ENCODE measurements at regions of chr1 and their contacts with region 1.

Region 1: GRCh38 chr1:171313835-171314320 is at the start of gene FMO4:
- DNase-seq: peak; percentile 94 to 97
- ATAC-seq: peak; percentile 100
- H3K4me3 ChIP-seq: peak within 1 kb of the TSS; percentile 33
- H3K27ac ChIP-seq: peak within 1 kb of the TSS in 1 of 2 experiments; percentile 47; a peak in 1 of 6 replicates
- H3K4me1 ChIP-seq: 0 out of 3 replicates have a peak, but pooled peaks cover 3% of the 10 kb centered on the region
- CTCF ChIP-seq: peak; percentile 86
- EP300 ChIP-seq: no peak
- POLR2A ChIP-seq: no peak
- RAD21 ChIP-seq: peak; percentile 72 to 75
- polyA plus RNA-seq, gene FMO4: 0.99 and 1.9 TPM in 2 replicates

Region 2: GRCh38 chr1:170967042-170967910 is 346.6 kb before region 1 on chr1:
- CTCF ChIA-PET with region 1: interaction called, 17 read pairs
- POLR2A ChIA-PET with region 1: interaction called, 3 read pairs
- DNase-seq: peak; percentile 10 to 33
- ATAC-seq: peak; percentile 59 to 82; a peak in 4 of 6 replicates
- H3K4me3 ChIP-seq: no peak overlapping the region
- H3K27ac ChIP-seq: no peak overlapping the region
- H3K4me1 ChIP-seq: no peaks in the 10 kb centered on the region
- CTCF ChIP-seq: peak; percentile 42
- EP300 ChIP-seq: no peak
- POLR2A ChIP-seq: no peak
- RAD21 ChIP-seq: peak; percentile 24 to 51; a peak in 2 of 5 replicates

Region 3: DNA sequence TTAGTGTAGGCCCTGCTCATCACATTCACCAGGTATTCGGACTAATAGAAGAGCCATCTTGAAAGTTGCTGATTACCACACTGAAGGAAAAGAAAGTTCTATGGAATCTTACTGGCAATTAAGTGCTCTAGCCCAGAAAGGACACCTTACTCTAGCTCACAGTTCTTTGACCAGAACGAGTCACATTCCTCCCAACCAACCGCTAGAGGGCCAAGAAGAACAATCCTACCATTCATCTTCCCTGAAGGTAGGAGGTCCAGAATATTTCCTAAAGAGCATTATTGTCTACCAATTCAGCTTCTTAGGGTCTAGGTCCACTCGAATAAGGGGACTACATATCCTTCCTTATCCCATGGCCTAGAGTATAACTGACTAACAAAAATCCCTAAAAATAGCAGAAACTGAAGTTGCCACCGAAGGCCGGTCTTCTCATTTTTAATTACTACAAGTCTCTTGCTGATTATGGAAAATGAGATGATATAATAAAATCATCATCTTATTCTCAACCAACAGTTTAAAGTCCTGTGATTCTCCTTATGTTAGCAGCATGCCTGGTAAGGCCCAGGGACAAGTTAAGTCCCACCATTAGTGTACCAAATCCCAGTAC is 68.3 kb before region 1 on chr1:
- CTCF ChIA-PET with region 1: interaction called, 17 read pairs
- POLR2A ChIA-PET with region 1: interaction called, 3 read pairs
- DNase-seq: peak; percentile 48 to 58
- ATAC-seq: peak; percentile 95 to 96
- H3K4me3 ChIP-seq: no peak overlapping the region
- H3K27ac ChIP-seq: no peak overlapping the region
- H3K4me1 ChIP-seq: no peaks in the 10 kb centered on the region
- CTCF ChIP-seq: peak; percentile 68
- EP300 ChIP-seq: no peak
- POLR2A ChIP-seq: no peak
- RAD21 ChIP-seq: peak; percentile 43; a peak in 4 of 5 replicates

Region 4: DNA sequence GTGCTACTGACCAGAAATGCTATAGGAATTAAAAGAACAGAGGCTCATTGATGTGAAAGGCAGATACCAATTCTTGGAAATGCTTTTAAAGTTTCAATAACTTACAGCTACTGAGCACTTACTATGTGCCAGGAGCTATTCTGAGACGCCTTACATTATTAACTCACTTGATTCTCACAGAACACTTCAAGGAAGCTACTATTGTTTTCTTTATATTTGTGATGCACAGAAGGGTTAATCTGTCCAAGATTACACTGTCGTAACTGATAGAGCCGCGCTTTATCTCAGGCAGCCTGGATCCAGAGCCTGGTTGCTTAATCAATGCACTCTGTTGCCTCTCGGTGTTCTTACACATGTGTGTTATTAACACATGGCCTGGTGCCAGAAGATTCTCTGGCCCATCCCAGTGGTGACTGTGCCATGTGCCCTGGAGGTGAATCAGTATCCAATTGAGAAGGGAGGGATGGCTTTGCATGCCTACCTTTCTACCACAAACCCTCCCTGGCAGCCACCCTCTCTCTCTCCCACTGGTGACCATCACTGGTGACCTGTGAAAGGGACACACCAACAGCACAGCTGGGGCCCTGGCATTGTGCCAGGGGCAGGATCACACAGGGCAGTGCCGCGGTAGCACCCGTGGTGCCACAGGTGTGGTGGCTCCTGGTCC is 56.8 kb before region 1 on chr1:
- CTCF ChIA-PET with region 1: interaction called, 10 read pairs
- POLR2A ChIA-PET with region 1: no interaction called
- DNase-seq: peak in 1 of 2 experiments; percentile 12
- ATAC-seq: no peak
- H3K4me3 ChIP-seq: no peak overlapping the region
- H3K27ac ChIP-seq: no peak overlapping the region
- H3K4me1 ChIP-seq: peaks cover 4% of the 10 kb centered on the region; the same call in 1 of the 3 replicates
- CTCF ChIP-seq: no peak
- EP300 ChIP-seq: no peak
- POLR2A ChIP-seq: no peak
- RAD21 ChIP-seq: no peak

Region 5: DNA sequence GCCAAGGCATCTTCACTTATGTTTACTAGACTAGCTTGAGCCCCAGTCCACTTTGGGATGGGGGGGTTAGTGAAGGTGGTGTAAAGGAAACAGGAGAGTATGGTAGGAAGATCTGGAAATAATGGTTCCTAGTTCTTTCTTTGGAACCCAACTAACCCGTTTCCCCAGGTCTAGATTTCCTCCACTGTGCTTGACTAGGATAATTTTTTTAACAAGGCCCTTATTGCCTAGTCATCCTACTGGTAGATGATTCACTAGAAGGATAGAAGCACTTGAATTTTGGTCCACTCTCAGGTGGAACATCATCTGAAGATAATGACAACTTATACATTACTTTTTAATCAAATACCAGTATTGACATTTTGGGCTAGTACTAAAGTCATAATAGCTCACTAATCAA is 262.3 kb after region 1 on chr1:
- CTCF ChIA-PET with region 1: no interaction called
- POLR2A ChIA-PET with region 1: no interaction called
- DNase-seq: peak in 1 of 2 experiments; percentile 24
- ATAC-seq: peak in 1 of 2 experiments; percentile 45; a peak in 2 of 6 replicates
- H3K4me3 ChIP-seq: no peak overlapping the region
- H3K27ac ChIP-seq: peak overlapping the region in 1 of 2 experiments; percentile 52; a peak in 2 of 6 replicates
- H3K4me1 ChIP-seq: peaks cover 9% of the 10 kb centered on the region
- CTCF ChIP-seq: no peak
- EP300 ChIP-seq: no peak
- POLR2A ChIP-seq: no peak
- RAD21 ChIP-seq: no peak